Activated CD4-positive, alpha-beta T cell treated with anti-CD3 and anti-CD28 coated beads for 36 hours (primary cell): ENCODE measurements at regions of chr16 and their contacts with region 1.

Region 1: GRCh38 chr16:18801197-18801972 is at the start of gene ARL6IP1:
- DNase-seq: peak; percentile 99
- ATAC-seq: peak; percentile 98
- H3K4me3 Mint-ChIP-seq: peak within 1 kb of the TSS; percentile 86
- H3K27ac Mint-ChIP-seq: peak within 1 kb of the TSS; percentile 99
- H3K4me1 Mint-ChIP-seq: peaks cover 47% of the 10 kb centered on the region
- H3K27me3 Mint-ChIP-seq: no peaks in the 10 kb centered on the region
- total RNA-seq, gene ARL6IP1: 92.0 to 102 TPM

Region 2: DNA sequence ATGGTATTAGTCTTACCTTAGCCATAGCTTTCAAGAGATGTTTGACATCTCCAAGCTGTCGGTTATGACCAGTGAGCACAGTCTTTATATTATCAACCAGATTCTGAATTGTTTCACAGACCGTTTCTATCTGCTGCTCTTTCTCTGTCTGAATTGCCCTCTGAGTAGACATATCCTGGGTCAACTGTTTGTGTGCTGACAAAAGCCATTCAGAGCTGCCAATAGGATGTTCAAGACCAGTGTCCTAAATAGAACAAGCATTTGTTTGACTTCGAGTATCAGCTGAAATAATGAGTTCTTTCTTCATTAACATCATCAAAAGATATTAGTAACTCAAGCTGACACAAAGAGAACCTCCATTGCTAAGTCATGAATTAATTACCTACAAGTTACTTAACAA is 14.9 kb after region 1 on chr16:
- CTCF ChIA-PET with region 1: interaction called, 18 read pairs
- POLR2A ChIA-PET with region 1: interaction called, 3 read pairs
- intact Hi-C with region 1: no loop called
- DNase-seq: no peak
- ATAC-seq: no peak
- H3K4me3 Mint-ChIP-seq: no peak overlapping the region
- H3K27ac Mint-ChIP-seq: peak overlapping the region; percentile 25
- H3K4me1 Mint-ChIP-seq: peaks cover 12% of the 10 kb centered on the region
- H3K27me3 Mint-ChIP-seq: no peaks in the 10 kb centered on the region

Region 3: GRCh38 chr16:18855196-18855595 is 53.8 kb after region 1 on chr16:
- CTCF ChIA-PET with region 1: interaction called, 5 read pairs
- POLR2A ChIA-PET with region 1: no interaction called
- intact Hi-C with region 1: loop called in 1 of 2 experiments (anchors 5 kb)
- DNase-seq: no peak
- ATAC-seq: no peak
- H3K4me3 Mint-ChIP-seq: no peak overlapping the region
- H3K27ac Mint-ChIP-seq: peak overlapping the region; percentile 78
- H3K4me1 Mint-ChIP-seq: peaks cover 19% of the 10 kb centered on the region
- H3K27me3 Mint-ChIP-seq: no peaks in the 10 kb centered on the region

Region 4: DNA sequence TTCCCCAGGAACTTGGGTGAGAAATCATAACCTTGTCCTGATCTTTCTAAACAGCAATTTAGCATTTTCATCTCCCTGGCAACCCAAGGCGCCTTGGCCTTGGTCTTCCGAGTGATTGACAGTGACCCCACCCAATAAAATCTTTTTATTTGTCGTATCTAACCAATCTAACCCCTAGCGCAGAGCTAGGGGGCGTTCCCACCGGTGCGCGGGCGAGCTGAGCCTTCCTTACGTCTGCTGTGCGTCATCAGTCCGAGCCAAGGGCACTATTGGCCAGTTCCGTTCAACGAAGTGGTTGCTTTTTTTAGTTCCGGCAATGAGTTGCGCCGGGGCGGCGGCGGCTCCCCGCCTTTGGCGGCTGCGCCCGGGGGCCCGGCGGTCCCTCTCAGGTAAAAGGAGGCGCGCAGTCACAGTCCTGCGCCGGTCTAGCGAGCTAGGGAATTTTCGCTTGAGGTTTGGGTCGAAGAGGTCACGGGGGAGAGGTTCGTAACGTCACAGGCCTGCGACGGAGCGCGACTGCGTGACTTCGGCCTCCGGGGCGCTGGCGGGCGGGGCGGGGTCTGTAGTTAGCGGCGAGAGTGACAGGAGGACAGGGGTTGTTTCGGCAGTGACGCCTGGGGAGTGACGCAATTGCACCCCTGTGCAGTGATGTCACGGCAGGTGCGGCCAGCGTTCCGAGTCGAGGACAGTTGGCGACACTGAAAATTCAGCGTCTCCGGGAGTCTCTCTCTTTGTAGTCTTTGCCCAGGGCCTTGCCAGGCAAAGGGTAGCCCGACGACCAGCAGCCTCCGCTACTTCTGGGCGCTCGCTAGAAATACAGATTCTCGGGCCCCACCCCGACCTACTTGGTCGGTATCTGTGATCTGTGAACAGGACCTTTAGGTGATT is 266.2 kb after region 1 on chr16 and contains the start of gene COQ7:
- CTCF ChIA-PET with region 1: no interaction called
- POLR2A ChIA-PET with region 1: interaction called, 4 read pairs
- intact Hi-C with region 1: loop called (anchors 1 kb)
- DNase-seq: peak; percentile 99
- ATAC-seq: peak; percentile 95
- H3K4me3 Mint-ChIP-seq: peak within 1 kb of the TSS; percentile 86
- H3K27ac Mint-ChIP-seq: peak within 1 kb of the TSS; percentile 96
- H3K4me1 Mint-ChIP-seq: peaks cover 10% of the 10 kb centered on the region
- H3K27me3 Mint-ChIP-seq: peaks cover 2% of the 10 kb centered on the region
- total RNA-seq, gene COQ7: 13.2 to 16.0 TPM

Region 5: GRCh38 chr16:19196871-19197270 is 395.5 kb after region 1 on chr16:
- CTCF ChIA-PET with region 1: no interaction called
- POLR2A ChIA-PET with region 1: no interaction called
- intact Hi-C with region 1: no loop called
- DNase-seq: no peak
- ATAC-seq: no peak
- H3K4me3 Mint-ChIP-seq: no peak overlapping the region
- H3K27ac Mint-ChIP-seq: no peak overlapping the region
- H3K4me1 Mint-ChIP-seq: no peaks in the 10 kb centered on the region
- H3K27me3 Mint-ChIP-seq: peaks cover 6% of the 10 kb centered on the region

Region 6: DNA sequence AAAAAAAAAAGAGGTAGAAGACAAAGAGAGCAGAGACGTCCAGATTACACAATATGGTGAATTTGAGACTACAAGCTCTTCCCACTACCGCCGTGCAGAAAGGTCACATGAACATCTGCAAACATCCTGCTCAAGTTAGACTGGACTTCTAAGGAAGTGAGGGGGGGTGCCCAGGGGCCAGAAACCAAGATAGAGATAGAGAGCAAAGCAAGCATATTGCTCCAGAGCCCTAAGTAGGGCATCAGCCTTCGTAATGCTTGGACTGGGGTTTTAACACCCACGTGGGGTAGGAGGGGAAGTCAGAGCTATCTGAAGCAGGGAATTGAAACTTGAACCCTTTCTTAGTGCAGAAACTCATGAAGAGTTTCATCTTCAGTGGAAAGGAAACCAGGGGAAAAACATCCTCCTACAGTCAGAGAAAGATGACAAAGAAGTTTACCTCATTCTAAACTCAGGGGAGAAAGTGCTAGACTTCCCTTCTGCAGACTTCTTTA is 492.8 kb after region 1 on chr16:
- CTCF ChIA-PET with region 1: no interaction called
- POLR2A ChIA-PET with region 1: no interaction called
- intact Hi-C with region 1: no loop called
- DNase-seq: peak; percentile 73
- ATAC-seq: peak; percentile 92
- H3K4me3 Mint-ChIP-seq: peak overlapping the region; percentile 6
- H3K27ac Mint-ChIP-seq: peak overlapping the region; percentile 68
- H3K4me1 Mint-ChIP-seq: peaks cover 34% of the 10 kb centered on the region
- H3K27me3 Mint-ChIP-seq: peaks cover 17% of the 10 kb centered on the region

Region 7: DNA sequence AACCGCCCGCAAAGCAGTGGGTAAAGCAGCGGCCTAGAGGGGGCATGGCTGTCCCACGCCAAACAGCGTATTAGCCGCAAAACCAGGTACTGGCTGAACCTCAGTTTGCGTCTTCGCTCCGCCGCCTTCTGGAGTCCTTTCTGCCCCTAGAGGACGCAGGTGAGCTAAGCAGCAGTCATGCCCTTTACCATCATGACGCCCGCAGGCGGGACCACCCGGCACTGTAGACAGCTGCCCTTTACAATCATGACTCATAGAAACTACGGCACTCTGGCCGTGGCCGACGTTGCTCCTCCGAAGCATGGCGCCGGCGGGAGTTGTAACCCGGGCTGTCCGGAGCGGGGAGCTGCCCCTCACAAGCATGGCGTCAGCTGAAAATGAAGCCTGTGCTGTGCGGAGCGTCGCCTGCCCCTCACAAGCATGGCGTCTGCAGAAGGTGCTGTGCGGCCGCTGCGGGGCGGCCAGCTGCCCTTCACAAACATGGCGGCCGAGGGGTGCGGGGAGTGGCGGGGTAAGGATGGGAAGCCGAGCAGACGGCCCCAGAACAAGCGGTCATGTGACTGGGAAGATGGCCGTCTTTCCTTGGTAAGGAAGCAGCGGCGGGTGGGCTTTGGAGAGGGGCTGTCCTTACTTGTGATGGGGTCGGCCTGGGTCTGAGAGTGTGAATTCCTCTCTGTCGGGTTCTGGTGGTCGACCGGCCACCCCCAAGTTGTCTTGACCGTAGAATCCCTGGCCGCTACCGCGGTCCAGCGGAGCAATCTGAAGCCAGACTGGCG is 754.0 kb after region 1 on chr16 and contains the start of gene VPS35L:
- CTCF ChIA-PET with region 1: no interaction called
- POLR2A ChIA-PET with region 1: no interaction called
- intact Hi-C with region 1: loop called in 1 of 2 experiments (anchors 1 kb)
- DNase-seq: peak; percentile 96
- ATAC-seq: peak; percentile 97
- H3K4me3 Mint-ChIP-seq: peak within 1 kb of the TSS; percentile 86
- H3K27ac Mint-ChIP-seq: peak within 1 kb of the TSS; percentile 87
- H3K4me1 Mint-ChIP-seq: peaks cover 20% of the 10 kb centered on the region
- H3K27me3 Mint-ChIP-seq: no peaks in the 10 kb centered on the region
- total RNA-seq, gene VPS35L: 30.7 to 31.6 TPM